ENCODE measurements at regions of chr1 and their contacts with region 1.

Region 1: GRCh38 chr1:92310185-92310597 is 11.3 kb downstream of the RPAP2 start:
- DNase-seq: peak; percentile 29
- CTCF ChIP-seq: peak; percentile 46

Region 2: GRCh38 chr1:92298573-92299476 is 11.4 kb before region 1 on chr1 and contains the starts of genes GLMN and RPAP2:
- CTCF ChIA-PET with region 1: interaction called, 15 read pairs
- POLR2A ChIA-PET with region 1: no interaction called
- DNase-seq: peak; percentile 92
- CTCF ChIP-seq: no peak

Region 3: DNA sequence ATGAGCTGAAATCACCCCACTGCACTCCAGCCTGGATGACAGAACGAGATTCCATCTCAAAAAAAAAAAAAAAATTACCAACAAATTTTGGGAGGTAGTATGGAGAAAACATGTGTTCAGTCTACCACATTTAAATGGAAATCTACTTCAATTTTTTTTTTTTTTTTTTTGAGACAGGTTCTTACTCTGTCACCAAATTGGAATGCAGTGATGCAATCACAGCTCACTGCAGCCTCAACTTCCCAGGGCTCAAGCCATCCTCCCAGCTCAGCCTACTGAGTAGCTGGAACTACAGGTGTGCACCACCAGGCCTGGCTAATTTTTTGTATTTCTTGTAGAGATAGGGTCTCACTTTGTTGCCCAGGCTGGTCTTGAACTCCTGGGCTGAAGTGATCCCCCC is 94.5 kb after region 1 on chr1:
- CTCF ChIA-PET with region 1: no interaction called
- POLR2A ChIA-PET with region 1: no interaction called
- DNase-seq: no peak
- CTCF ChIP-seq: no peak

Region 4: DNA sequence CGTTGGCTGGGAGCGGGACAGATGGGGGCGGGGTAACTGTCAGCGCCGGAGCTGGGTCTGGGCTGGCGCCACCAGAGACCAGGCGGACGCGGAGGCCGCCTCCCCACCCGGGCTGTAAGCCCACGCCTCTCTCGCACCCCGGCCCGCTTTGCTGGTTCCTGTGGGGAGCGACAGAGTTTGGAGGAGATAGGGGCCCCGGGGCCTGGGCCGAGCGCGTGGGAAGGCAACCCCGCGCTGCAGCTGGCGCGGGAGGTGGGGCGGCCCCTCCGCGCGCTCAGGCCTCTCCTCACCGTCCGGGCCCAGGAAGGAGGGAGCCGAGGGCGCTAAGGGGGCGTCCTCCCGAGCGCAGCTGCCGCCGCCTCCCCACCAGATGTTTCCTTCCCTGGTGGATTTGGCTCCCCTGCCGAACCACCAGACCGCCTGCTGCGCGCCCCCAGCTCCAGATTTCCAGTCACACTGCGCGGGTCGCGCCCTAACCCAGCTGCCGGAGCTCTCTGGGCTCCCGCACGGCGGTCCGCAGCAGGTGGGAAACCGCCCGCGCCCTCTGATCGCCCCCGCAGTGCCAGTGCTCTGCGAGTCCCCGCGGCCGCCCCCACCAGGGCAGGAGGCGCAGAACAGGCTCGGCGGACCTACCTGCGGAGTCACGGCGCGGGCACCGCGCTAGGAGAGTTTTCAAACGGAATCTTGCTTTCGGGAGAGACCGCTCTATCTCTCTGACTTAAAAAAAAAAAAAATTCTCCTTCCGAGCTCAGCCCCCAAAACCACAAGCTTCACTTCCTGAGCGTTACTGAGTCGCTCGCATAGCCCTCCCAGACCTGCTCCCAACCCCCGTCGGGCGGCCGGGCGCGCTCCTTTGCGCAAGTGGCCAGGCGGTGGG is 175.4 kb after region 1 on chr1:
- CTCF ChIA-PET with region 1: interaction called, 15 read pairs
- POLR2A ChIA-PET with region 1: no interaction called
- DNase-seq: peak; percentile 74
- CTCF ChIP-seq: peak; percentile 58

Region 5: GRCh38 chr1:92599184-92599583 is 289.0 kb after region 1 on chr1:
- CTCF ChIA-PET with region 1: interaction called, 10 read pairs
- POLR2A ChIA-PET with region 1: no interaction called
- DNase-seq: peak; percentile 43
- CTCF ChIP-seq: peak; percentile 46

Region 6: DNA sequence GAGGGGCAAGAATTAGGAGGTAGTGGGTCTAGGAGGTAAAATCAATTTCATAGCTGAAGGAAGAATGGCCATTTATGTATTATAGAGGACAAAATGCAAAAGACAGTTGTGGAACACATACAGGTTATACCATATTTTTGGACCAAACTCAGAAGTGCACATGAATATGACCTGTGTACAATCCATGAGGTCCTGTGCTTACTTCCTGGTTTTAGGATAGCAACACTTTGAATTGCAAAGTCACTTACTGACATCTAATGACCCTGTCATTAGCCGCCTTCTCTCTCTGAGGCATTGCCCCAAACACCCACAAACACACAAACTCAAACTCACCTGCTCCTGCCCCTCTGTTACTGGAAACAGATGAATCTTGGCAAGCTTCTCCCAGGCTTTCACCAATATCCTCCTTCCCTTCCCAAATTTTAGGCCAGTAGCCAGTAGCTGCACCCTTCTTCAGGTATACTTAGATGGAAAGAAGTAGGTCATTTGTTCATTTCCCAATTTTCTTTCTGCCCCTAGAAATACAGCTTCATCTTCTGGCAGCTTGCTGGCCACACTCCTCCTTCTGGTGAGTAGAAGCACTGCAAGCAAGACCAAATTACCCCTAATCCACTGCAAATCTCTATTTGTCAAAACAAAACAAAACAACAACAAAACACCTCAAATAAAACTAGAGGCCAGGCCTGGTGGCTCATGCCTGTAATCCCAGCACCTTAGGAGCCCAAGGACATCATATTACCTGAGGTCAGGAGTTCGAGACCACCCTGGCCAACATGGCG is 508.0 kb after region 1 on chr1:
- CTCF ChIA-PET with region 1: interaction called, 11 read pairs
- POLR2A ChIA-PET with region 1: no interaction called
- DNase-seq: peak; percentile 46
- CTCF ChIP-seq: peak; percentile 82